Posterior vena cava (tissue), 2 donors: ENCODE measurements at regions of chr14 and their contacts with region 1.

Region 1: GRCh38 chr14:85409496-85410210 is 120.3 kb upstream of the FLRT2 start:
- DNase-seq: no peak

Region 2: GRCh38 chr14:85358136-85358785 is 51.4 kb before region 1 on chr14:
- intact Hi-C with region 1: no loop called
- DNase-seq: no peak

Region 3: GRCh38 chr14:85714069-85714468 is 304.4 kb after region 1 on chr14:
- intact Hi-C with region 1: loop called in 1 of 2 experiments (anchors 5 kb)
- DNase-seq: no peak